ENCODE measurements at regions of chr21 and their contacts with region 1.

Region 1: DNA sequence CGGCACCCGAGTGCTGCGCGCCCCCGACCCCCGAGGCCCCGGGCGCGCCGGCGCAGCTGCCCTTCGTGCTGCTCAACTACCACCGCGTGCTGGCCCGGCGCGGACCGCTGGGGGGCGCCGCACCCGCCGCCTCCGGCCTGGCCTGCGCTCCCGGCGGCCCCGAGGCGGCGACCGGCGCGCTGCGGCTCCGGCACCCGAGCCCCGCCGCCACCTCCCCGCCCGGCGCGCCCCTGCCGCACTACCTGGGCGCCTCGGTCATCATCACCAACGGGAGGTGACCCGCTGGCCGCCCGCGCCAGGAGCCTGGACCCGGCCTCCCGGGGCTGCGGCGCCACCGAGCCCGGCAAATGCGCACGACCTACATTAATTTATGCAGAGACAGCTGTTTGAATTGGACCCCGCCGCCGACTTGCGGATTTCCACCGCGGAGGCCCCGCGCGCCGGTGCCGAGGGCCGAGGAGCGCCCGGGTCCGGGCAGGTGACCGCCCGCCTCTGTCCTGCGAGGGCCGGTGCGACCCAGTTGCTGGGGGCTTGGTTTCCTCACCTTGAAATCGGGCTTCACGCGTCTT is 49.0 kb downstream of the SIM2 start:
- DNase-seq: peak; percentile 48 to 92 (median 66)
- ATAC-seq: peak; percentile 88 to 95 (median 92)
- H3K4me3 ChIP-seq: peak overlapping the region; percentile 18 to 56 (median 31)
- H3K27ac ChIP-seq: no peak overlapping the region
- H3K4me1 ChIP-seq: no peaks in the 10 kb centered on the region
- H3K27me3 ChIP-seq: no peaks in the 10 kb centered on the region
- CTCF ChIP-seq: no peak

Region 2: DNA sequence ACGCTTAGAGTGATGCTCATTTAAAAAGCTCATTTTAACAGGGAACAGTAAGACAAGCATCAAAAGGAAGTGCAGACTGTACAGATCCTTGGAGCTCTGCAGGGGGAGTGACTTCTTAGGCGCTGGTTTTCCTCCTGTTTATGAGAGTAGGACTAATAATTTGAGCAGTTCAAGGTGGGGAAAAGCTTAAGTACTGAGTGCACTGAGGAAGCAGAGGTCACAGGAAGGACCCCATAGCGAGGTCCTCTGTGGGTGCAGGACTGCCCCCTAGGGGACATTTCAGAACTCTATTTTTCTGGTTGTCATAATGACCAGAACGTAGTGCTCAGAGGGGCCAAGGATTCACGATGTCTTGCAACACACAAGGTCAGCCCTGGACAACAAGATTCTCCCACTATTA is 106.5 kb after region 1 on chr21:
- intact Hi-C with region 1: loop called in 1 of 3 experiments (anchors 10 kb)
- DNase-seq: no peak
- ATAC-seq: peak in 3 of 4 donors; percentile 47 to 85 (median 65)
- H3K4me3 ChIP-seq: no peak overlapping the region
- H3K27ac ChIP-seq: no peak overlapping the region
- H3K4me1 ChIP-seq: peaks cover 0 to 2% (median 0%) of the 10 kb centered on the region in 3 donors
- H3K27me3 ChIP-seq: no peaks in the 10 kb centered on the region
- CTCF ChIP-seq: peak in 3 of 4 donors; percentile 42 to 48 (median 45)

Measured in pancreas (tissue), 10 donors.